ENCODE measurements at regions of chr3 and their contacts with region 1.

Region 1: GRCh38 chr3:107574650-107575049 is 51.9 kb downstream of the BBX start:
- DNase-seq: no peak
- H3K4me3 ChIP-seq: no peak overlapping the region
- H3K27ac ChIP-seq: no peak overlapping the region
- H3K4me1 ChIP-seq: no peaks in the 10 kb centered on the region
- H3K27me3 ChIP-seq: no peaks in the 10 kb centered on the region
- CTCF ChIP-seq: peak; percentile 38 to 45

Region 2: GRCh38 chr3:107441617-107442016 is 133.0 kb before region 1 on chr3:
- intact Hi-C with region 1: loop called (anchors 5 kb)
- DNase-seq: no peak
- H3K4me3 ChIP-seq: no peak overlapping the region
- H3K27ac ChIP-seq: no peak overlapping the region
- H3K4me1 ChIP-seq: no peaks in the 10 kb centered on the region
- H3K27me3 ChIP-seq: no peaks in the 10 kb centered on the region
- CTCF ChIP-seq: no peak

Region 3: DNA sequence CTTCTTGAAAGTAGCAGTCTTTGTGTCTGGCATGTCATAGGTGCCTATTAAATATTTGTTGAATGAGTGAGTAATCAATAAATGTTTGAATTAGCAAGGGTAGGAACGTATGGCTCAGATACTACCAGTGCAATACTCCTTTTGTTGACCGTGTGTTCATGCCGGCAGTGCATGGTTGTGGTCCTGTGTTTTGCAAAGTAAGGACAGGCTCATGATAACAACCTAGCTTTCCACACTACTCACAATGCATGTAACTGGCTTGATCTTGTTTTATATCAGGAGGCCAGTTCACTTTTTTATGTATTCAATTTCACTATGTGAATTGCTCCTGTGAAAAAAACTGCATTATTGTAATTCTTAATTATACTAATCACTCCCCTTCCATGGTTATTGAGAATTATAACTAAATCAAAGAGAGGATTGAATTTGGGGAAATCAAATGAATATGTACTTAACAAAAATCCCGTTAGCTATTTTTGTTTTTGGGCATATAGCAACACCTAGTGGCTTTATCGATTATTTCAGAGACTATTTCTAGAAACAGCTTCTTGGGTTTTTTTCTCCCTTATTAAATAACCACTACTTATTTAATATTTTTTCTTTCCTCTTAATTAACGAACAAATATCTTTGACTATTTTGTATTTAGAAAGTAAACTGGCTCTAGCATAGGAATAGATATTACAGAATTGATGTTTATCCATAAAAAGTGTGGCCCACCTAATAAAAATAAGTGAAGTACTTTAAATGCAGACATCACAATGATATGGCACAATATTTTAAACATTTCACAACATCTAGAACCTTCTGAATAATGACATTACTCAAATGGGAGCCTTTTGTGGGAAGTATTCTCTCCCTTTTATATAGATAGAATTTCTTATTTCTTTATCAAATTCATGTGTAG is 166.6 kb after region 1 on chr3:
- intact Hi-C with region 1: loop called (anchors 10 kb)
- DNase-seq: no peak
- H3K4me3 ChIP-seq: no peak overlapping the region
- H3K27ac ChIP-seq: no peak overlapping the region
- H3K4me1 ChIP-seq: no peaks in the 10 kb centered on the region
- H3K27me3 ChIP-seq: no peaks in the 10 kb centered on the region
- CTCF ChIP-seq: peak; percentile 59 to 61

Region 4: GRCh38 chr3:107846279-107846852 is 271.7 kb after region 1 on chr3:
- intact Hi-C with region 1: loop called (anchors 10 kb)
- DNase-seq: peak; percentile 53 to 81
- H3K4me3 ChIP-seq: no peak overlapping the region
- H3K27ac ChIP-seq: no peak overlapping the region
- H3K4me1 ChIP-seq: peaks cover 0 to 11% (median 1%) of the 10 kb centered on the region in 4 donors
- H3K27me3 ChIP-seq: no peaks in the 10 kb centered on the region
- CTCF ChIP-seq: peak; percentile 55 to 58

Region 5: DNA sequence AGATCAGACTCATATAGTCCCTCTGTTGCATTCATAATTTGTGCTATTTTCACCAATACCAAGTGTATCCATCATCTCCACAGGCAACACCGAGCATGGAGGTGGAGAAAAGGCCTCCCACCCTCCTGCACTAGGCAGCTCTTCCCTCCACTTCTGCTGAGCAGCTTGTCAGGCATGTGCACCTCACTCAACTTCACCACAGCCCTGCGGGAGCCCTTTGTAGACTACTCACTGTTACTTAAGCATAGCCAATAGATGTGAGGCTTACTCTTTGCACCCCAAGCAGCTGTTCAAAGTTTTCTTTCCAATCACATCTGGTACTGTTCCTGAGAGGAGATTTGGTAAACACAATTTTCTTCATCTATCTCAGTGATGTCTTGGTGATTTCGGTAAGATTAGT is 1395.9 kb after region 1 on chr3:
- intact Hi-C with region 1: no loop called
- DNase-seq: no peak
- H3K4me3 ChIP-seq: no peak overlapping the region
- H3K27ac ChIP-seq: no peak overlapping the region
- H3K4me1 ChIP-seq: no peaks in the 10 kb centered on the region
- H3K27me3 ChIP-seq: no peaks in the 10 kb centered on the region
- CTCF ChIP-seq: no peak

Measured in tibial artery (tissue), 4 donors.